HCT116 (cell line): ENCODE measurements at regions of chr18 and their contacts with region 1.

Region 1: GRCh38 chr18:8882632-8883408 is 177.5 kb downstream of the MTCL1 start:
- DNase-seq: peak; percentile 95
- ATAC-seq: peak; percentile 93
- H3K4me3 ChIP-seq: peak overlapping the region in 1 of 2 experiments; percentile 25; a peak in 1 of 4 replicates
- H3K27ac ChIP-seq: peak overlapping the region; percentile 66
- H3K4me1 ChIP-seq: peaks cover 5 to 19% of the 10 kb centered on the region in 2 experiments; a peak in 3 of 4 replicates
- H3K27me3 ChIP-seq: no peaks in the 10 kb centered on the region
- CTCF ChIP-seq: peak; percentile 60 to 74 (median 72); a peak in 5 of 6 replicates
- POLR2A ChIP-seq: no peak
- RAD21 ChIP-seq: peak; percentile 72

Region 2: DNA sequence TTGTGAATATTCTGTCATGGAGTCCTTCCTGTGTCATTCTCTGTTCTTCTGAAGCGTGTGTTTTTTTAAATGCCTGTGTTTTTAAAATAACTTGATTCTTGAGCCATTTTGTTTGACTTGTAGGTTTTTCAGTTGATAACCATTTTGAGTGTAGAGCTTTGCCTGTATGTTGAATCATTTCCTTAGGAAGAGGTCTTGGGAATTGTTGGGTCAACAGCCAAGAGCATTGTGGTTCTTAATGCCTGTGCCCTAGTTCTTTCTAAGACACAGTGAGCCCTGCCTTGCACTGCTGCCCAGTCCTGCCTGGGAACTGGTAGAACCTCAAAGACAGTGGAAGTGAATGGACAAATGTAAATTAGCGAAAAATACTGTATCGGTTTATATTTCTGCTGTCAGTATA is 247.7 kb before region 1 on chr18:
- CTCF ChIA-PET with region 1: no interaction called
- POLR2A ChIA-PET with region 1: no interaction called
- RAD21 ChIA-PET with region 1: no interaction called
- intact Hi-C with region 1: no loop called
- DNase-seq: no peak
- ATAC-seq: no peak
- H3K4me3 ChIP-seq: no peak overlapping the region
- H3K27ac ChIP-seq: no peak overlapping the region
- H3K4me1 ChIP-seq: no peaks in the 10 kb centered on the region
- H3K27me3 ChIP-seq: no peaks in the 10 kb centered on the region
- CTCF ChIP-seq: no peak
- POLR2A ChIP-seq: no peak
- RAD21 ChIP-seq: no peak

Region 3: GRCh38 chr18:8982416-8983184 is 99.8 kb after region 1 on chr18:
- CTCF ChIA-PET with region 1: interaction called, 6 read pairs
- POLR2A ChIA-PET with region 1: no interaction called
- RAD21 ChIA-PET with region 1: interaction called in 1 of 2 experiments, 3 read pairs
- intact Hi-C with region 1: loop called (anchors 1 kb)
- DNase-seq: peak; percentile 63
- ATAC-seq: peak; percentile 97
- H3K4me3 ChIP-seq: no peak overlapping the region
- H3K27ac ChIP-seq: no peak overlapping the region
- H3K4me1 ChIP-seq: peaks cover 0 to 9% of the 10 kb centered on the region in 2 experiments; a peak in 2 of 4 replicates
- H3K27me3 ChIP-seq: no peaks in the 10 kb centered on the region
- CTCF ChIP-seq: peak; percentile 55 to 82 (median 82)
- POLR2A ChIP-seq: no peak
- RAD21 ChIP-seq: peak; percentile 91